ENCODE measurements at regions of chr11 and their contacts with region 1.

Region 1: GRCh38 chr11:45110562-45110961 is 35.9 kb upstream of the PRDM11 start:
- DNase-seq: peak in 7 of 14 experiments; percentile 9 to 82 (median 45)
- ATAC-seq: peak; percentile 71
- H3K4me3 ChIP-seq: no peak overlapping the region
- H3K4me3 Mint-ChIP-seq: no peak overlapping the region
- H3K27ac ChIP-seq: no peak overlapping the region
- H3K27ac Mint-ChIP-seq: no peak overlapping the region
- H3K4me1 ChIP-seq: peaks cover 4% of the 10 kb centered on the region
- H3K4me1 Mint-ChIP-seq: no peaks in the 10 kb centered on the region
- H3K27me3 ChIP-seq: peaks cover 0 to 4% of the 10 kb centered on the region in 2 experiments
- H3K27me3 Mint-ChIP-seq: peaks cover 55% of the 10 kb centered on the region
- CTCF ChIP-seq: peak; percentile 71

Region 2: DNA sequence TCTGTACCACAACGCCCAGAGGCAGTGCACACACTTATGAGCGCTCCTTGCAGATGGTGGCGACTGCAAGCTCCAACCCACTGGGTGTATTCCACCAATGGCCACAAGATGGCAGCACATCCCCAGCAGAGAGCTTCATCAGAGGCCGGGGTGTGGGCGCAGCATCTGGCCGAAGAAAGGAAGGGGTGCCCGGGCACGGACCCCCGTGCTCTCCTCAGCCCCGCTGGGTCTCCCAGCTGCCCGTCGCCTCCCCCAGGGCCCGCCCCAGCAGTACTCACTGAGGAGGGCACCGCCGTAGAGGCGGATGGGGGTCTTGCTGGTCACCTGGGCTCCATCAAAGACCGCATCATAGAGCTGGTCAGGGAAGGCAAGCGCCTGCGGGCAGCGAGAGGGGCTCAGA is 174.0 kb before region 1 on chr11:
- CTCF ChIA-PET with region 1: interaction called, 103 read pairs
- POLR2A ChIA-PET with region 1: interaction called, 7 read pairs
- intact Hi-C with region 1: loop called in 1 of 2 experiments (anchors 1 kb)
- DNase-seq: peak; percentile 66 to 90 (median 82)
- ATAC-seq: peak; percentile 90
- H3K4me3 ChIP-seq: no peak overlapping the region
- H3K4me3 Mint-ChIP-seq: no peak overlapping the region
- H3K27ac ChIP-seq: no peak overlapping the region
- H3K27ac Mint-ChIP-seq: no peak overlapping the region
- H3K4me1 ChIP-seq: peaks cover 5% of the 10 kb centered on the region
- H3K4me1 Mint-ChIP-seq: no peaks in the 10 kb centered on the region
- H3K27me3 ChIP-seq: no peaks in the 10 kb centered on the region
- H3K27me3 Mint-ChIP-seq: no peaks in the 10 kb centered on the region
- CTCF ChIP-seq: peak; percentile 87

Region 3: GRCh38 chr11:45233121-45233803 is 122.7 kb after region 1 on chr11:
- CTCF ChIA-PET with region 1: interaction called, 5 read pairs
- POLR2A ChIA-PET with region 1: no interaction called
- intact Hi-C with region 1: loop called in 1 of 2 experiments (anchors 10 kb)
- DNase-seq: peak; percentile 25 to 66 (median 44)
- ATAC-seq: peak; percentile 61
- H3K4me3 ChIP-seq: no peak overlapping the region
- H3K4me3 Mint-ChIP-seq: no peak overlapping the region
- H3K27ac ChIP-seq: no peak overlapping the region
- H3K27ac Mint-ChIP-seq: no peak overlapping the region
- H3K4me1 ChIP-seq: peaks cover 4% of the 10 kb centered on the region
- H3K4me1 Mint-ChIP-seq: no peaks in the 10 kb centered on the region
- H3K27me3 ChIP-seq: peaks cover 0 to 3% of the 10 kb centered on the region in 2 experiments
- H3K27me3 Mint-ChIP-seq: peaks cover 16% of the 10 kb centered on the region
- CTCF ChIP-seq: peak; percentile 66

Region 4: GRCh38 chr11:45289369-45289768 is 178.8 kb after region 1 on chr11:
- CTCF ChIA-PET with region 1: interaction called, 3 read pairs
- POLR2A ChIA-PET with region 1: interaction called, 3 read pairs
- intact Hi-C with region 1: loop called (anchors 1 kb)
- DNase-seq: no peak
- ATAC-seq: no peak
- H3K4me3 ChIP-seq: no peak overlapping the region
- H3K4me3 Mint-ChIP-seq: no peak overlapping the region
- H3K27ac ChIP-seq: no peak overlapping the region
- H3K27ac Mint-ChIP-seq: no peak overlapping the region
- H3K4me1 ChIP-seq: peaks cover 3% of the 10 kb centered on the region
- H3K4me1 Mint-ChIP-seq: no peaks in the 10 kb centered on the region
- H3K27me3 ChIP-seq: peaks cover 47 to 76% of the 10 kb centered on the region in 2 experiments
- H3K27me3 Mint-ChIP-seq: peaks cover 90% of the 10 kb centered on the region
- CTCF ChIP-seq: no peak

Region 5: DNA sequence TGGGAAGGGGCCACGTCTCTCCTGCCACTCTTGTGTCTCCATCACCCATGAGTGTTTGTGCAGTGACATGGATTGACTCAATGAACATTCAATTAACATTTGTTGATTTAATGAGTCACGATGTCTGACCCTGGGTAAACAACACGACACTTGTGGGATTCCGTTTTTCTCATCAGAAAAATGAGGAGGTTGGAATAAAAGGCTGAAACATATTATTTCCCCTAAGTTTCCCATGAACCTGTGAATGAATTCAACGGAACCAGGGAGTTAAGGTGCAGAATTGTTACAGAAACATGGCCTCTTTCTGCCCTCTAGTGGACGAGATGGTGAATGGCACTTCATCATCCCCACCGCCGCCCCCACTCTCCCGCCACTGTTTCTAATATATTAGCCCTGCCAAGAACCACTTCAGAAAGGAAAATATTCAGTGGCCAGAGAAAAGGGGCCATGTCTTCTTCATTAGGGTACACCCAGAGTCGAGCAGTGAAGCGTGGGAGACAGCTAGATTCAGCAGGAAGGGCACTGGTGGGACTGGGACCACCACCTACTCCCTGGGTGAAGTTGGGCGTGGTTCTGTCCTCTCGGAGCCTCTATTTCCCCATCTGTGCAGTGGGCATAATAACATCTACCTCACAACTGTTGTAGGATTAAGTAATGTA is 221.8 kb after region 1 on chr11:
- CTCF ChIA-PET with region 1: interaction called, 8 read pairs
- POLR2A ChIA-PET with region 1: no interaction called
- intact Hi-C with region 1: loop called (anchors 1 kb)
- DNase-seq: peak in 10 of 14 experiments; percentile 14 to 72 (median 34)
- ATAC-seq: peak; percentile 58
- H3K4me3 ChIP-seq: no peak overlapping the region
- H3K4me3 Mint-ChIP-seq: no peak overlapping the region
- H3K27ac ChIP-seq: no peak overlapping the region
- H3K27ac Mint-ChIP-seq: no peak overlapping the region
- H3K4me1 ChIP-seq: peaks cover 3% of the 10 kb centered on the region
- H3K4me1 Mint-ChIP-seq: no peaks in the 10 kb centered on the region
- H3K27me3 ChIP-seq: no peaks in the 10 kb centered on the region
- H3K27me3 Mint-ChIP-seq: peaks cover 13% of the 10 kb centered on the region
- CTCF ChIP-seq: peak; percentile 93